Caco-2 (cell line): ENCODE measurements at regions of chr5 and their contacts with region 1.

Region 1: GRCh38 chr5:160021831-160022446 is 13.0 kb downstream of the TTC1 start:
- DNase-seq: peak; percentile 56 to 71
- H3K4me3 ChIP-seq: no peak overlapping the region
- H3K4me3 Mint-ChIP-seq: no peak overlapping the region
- H3K27ac Mint-ChIP-seq: no peak overlapping the region
- H3K4me1 ChIP-seq: no peaks in the 10 kb centered on the region
- H3K4me1 Mint-ChIP-seq: peaks cover 7% of the 10 kb centered on the region
- H3K27me3 ChIP-seq: no peaks in the 10 kb centered on the region
- H3K27me3 Mint-ChIP-seq: no peaks in the 10 kb centered on the region
- CTCF ChIP-seq: peak; percentile 77 to 85

Region 2: DNA sequence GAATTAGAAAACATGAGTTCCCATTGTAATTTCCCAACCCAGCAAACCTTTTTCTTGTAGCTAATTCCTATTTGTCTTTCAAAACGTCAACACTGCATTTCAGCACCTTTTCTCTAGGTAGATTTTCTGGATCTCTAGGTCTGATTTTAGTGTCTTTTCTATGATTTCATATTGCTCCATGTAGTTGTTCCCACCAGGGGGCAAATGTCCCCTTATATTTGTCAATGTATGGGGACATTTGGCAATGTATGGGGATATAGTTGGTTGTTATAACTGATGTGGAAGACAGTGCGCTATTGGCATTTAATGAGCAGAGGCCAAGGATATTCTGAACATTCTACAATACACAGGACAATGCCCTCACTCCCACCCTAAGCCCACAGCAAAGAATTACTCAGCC is 379.6 kb before region 1 on chr5:
- CTCF ChIA-PET with region 1: no interaction called
- POLR2A ChIA-PET with region 1: no interaction called
- intact Hi-C with region 1: no loop called
- DNase-seq: no peak
- H3K4me3 ChIP-seq: no peak overlapping the region
- H3K4me3 Mint-ChIP-seq: no peak overlapping the region
- H3K27ac Mint-ChIP-seq: no peak overlapping the region
- H3K4me1 ChIP-seq: no peaks in the 10 kb centered on the region
- H3K4me1 Mint-ChIP-seq: no peaks in the 10 kb centered on the region
- H3K27me3 ChIP-seq: no peaks in the 10 kb centered on the region
- H3K27me3 Mint-ChIP-seq: peaks cover 12% of the 10 kb centered on the region
- CTCF ChIP-seq: no peak

Region 3: GRCh38 chr5:160008877-160009590 is 12.9 kb before region 1 on chr5 and contains the start of gene TTC1:
- CTCF ChIA-PET with region 1: interaction called, 11 read pairs
- POLR2A ChIA-PET with region 1: interaction called, 5 read pairs
- intact Hi-C with region 1: no loop called
- DNase-seq: peak; percentile 93 to 97
- H3K4me3 ChIP-seq: peak within 1 kb of the TSS; percentile 64
- H3K4me3 Mint-ChIP-seq: peak within 1 kb of the TSS; percentile 98
- H3K27ac Mint-ChIP-seq: peak within 1 kb of the TSS; percentile 96
- H3K4me1 ChIP-seq: peaks cover 5% of the 10 kb centered on the region; the same call in 1 of the 2 replicates
- H3K4me1 Mint-ChIP-seq: peaks cover 7% of the 10 kb centered on the region
- H3K27me3 ChIP-seq: no peaks in the 10 kb centered on the region
- H3K27me3 Mint-ChIP-seq: no peaks in the 10 kb centered on the region
- CTCF ChIP-seq: no peak
- total RNA-seq, gene TTC1: 50.3 and 53.0 TPM in 2 replicates

Region 4: GRCh38 chr5:160082614-160083500 is 60.9 kb after region 1 on chr5:
- CTCF ChIA-PET with region 1: interaction called, 8 read pairs
- POLR2A ChIA-PET with region 1: no interaction called
- intact Hi-C with region 1: loop called (anchors 5 kb)
- DNase-seq: no peak
- H3K4me3 ChIP-seq: no peak overlapping the region
- H3K4me3 Mint-ChIP-seq: no peak overlapping the region
- H3K27ac Mint-ChIP-seq: no peak overlapping the region
- H3K4me1 ChIP-seq: peaks cover 34% of the 10 kb centered on the region
- H3K4me1 Mint-ChIP-seq: peaks cover 25% of the 10 kb centered on the region
- H3K27me3 ChIP-seq: no peaks in the 10 kb centered on the region
- H3K27me3 Mint-ChIP-seq: no peaks in the 10 kb centered on the region
- CTCF ChIP-seq: no peak

Region 5: DNA sequence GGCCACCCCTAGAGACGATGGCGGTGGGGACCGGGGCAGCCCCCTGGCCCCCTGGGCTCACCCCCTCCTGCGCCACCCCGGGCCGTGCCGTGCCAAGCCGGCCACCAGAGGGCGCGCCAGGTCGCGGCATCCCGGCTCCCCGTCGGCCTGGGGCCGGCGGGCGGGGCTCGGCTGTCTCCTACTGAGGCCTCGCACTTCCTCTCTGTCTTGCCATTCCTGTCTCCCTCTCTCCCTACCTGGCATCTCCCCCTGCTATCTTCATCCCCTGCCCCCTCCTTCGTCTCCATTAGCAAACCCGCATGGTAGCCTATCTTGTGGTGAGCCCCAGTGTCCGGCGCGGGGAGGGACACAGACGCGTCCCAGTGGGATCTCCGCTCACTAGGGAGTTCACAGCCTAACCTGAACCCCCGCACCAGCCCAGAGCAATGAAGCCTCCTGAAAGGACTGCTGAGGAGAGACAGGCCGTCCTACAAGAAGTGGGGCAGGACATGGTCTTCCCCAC is 177.5 kb after region 1 on chr5:
- CTCF ChIA-PET with region 1: interaction called, 6 read pairs
- POLR2A ChIA-PET with region 1: no interaction called
- intact Hi-C with region 1: loop called (anchors 1 kb)
- DNase-seq: peak; percentile 62 to 90
- H3K4me3 ChIP-seq: peak overlapping the region; percentile 37
- H3K4me3 Mint-ChIP-seq: peak overlapping the region; percentile 78
- H3K27ac Mint-ChIP-seq: peak overlapping the region; percentile 75
- H3K4me1 ChIP-seq: peaks cover 21% of the 10 kb centered on the region
- H3K4me1 Mint-ChIP-seq: peaks cover 19% of the 10 kb centered on the region
- H3K27me3 ChIP-seq: no peaks in the 10 kb centered on the region
- H3K27me3 Mint-ChIP-seq: no peaks in the 10 kb centered on the region
- CTCF ChIP-seq: peak; percentile 63 to 94

Region 6: GRCh38 chr5:160399402-160400353 is 377.7 kb after region 1 on chr5 and contains the start of gene FAM200C:
- CTCF ChIA-PET with region 1: interaction called, 3 read pairs
- POLR2A ChIA-PET with region 1: interaction called, 3 read pairs
- intact Hi-C with region 1: loop called (anchors 1 kb)
- DNase-seq: peak; percentile 94 to 95
- H3K4me3 ChIP-seq: peak within 1 kb of the TSS; percentile 56
- H3K4me3 Mint-ChIP-seq: peak within 1 kb of the TSS; percentile 96
- H3K27ac Mint-ChIP-seq: peak within 1 kb of the TSS; percentile 96
- H3K4me1 ChIP-seq: no peaks in the 10 kb centered on the region; the same call in 1 of the 2 replicates
- H3K4me1 Mint-ChIP-seq: peaks cover 6% of the 10 kb centered on the region
- H3K27me3 ChIP-seq: no peaks in the 10 kb centered on the region
- H3K27me3 Mint-ChIP-seq: no peaks in the 10 kb centered on the region
- CTCF ChIP-seq: no peak
- total RNA-seq, gene FAM200C: 3.2 TPM in 2 replicates